Panc1 (cell line): ENCODE measurements at regions of chr2 and their contacts with region 1.

Region 1: GRCh38 chr2:219245148-219245898 is at the starts of genes GLB1L and STK16:
- DNase-seq: peak; percentile 62
- ATAC-seq: peak; percentile 95
- H3K4me3 ChIP-seq: peak within 1 kb of the TSS; percentile 84 to 94
- H3K27ac ChIP-seq: peak within 1 kb of the TSS; percentile 81
- H3K4me1 ChIP-seq: peaks cover 39% of the 10 kb centered on the region
- H3K27me3 ChIP-seq: no peaks in the 10 kb centered on the region
- CTCF ChIP-seq: no peak
- total RNA-seq, gene GLB1L: 8.1 TPM
- total RNA-seq, gene STK16: 29.9 TPM

Region 2: GRCh38 chr2:219229305-219230058 is 15.8 kb before region 1 on chr2 and contains the starts of genes ANKZF1 and ATG9A:
- CTCF ChIA-PET with region 1: no interaction called
- POLR2A ChIA-PET with region 1: interaction called, 11 read pairs
- in situ Hi-C with region 1: no loop called
- intact Hi-C with region 1: no loop called
- DNase-seq: peak; percentile 90
- ATAC-seq: peak; percentile 99
- H3K4me3 ChIP-seq: peak within 1 kb of the TSS; percentile 98 to 99
- H3K27ac ChIP-seq: peak within 1 kb of the TSS; percentile 91
- H3K4me1 ChIP-seq: peaks cover 8% of the 10 kb centered on the region
- H3K27me3 ChIP-seq: no peaks in the 10 kb centered on the region
- CTCF ChIP-seq: no peak
- total RNA-seq, gene ANKZF1: 36.2 TPM
- total RNA-seq, gene ATG9A: 75.1 TPM

Region 3: DNA sequence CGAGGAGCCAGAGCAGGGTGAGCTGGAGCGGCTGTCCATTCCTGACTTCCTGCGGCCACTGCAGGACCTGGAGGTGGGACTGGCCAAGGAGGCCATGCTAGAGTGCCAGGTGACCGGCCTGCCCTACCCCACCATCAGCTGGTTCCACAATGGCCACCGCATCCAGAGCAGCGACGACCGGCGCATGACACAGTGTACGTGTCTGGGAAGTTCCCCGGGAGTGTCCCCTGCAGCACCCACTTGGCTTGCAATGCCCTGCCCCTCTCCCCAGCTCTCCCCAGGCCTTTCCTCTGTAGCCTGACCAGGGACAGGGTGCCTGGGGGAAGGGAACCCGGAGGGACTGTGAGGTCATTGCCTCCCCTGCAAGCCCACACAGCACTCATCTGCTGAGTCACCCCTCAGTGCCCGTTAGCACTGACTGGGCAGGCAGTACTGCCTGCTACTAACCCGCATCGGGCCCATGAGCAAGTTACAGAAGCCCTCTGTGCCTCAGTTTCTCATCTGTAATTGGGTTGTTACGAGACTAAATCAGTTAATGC is 223.9 kb after region 1 on chr2:
- CTCF ChIA-PET with region 1: no interaction called
- POLR2A ChIA-PET with region 1: no interaction called
- in situ Hi-C with region 1: no loop called
- intact Hi-C with region 1: no loop called
- DNase-seq: no peak
- ATAC-seq: peak; percentile 43; the same call in 1 of the 2 replicates
- H3K4me3 ChIP-seq: no peak overlapping the region
- H3K27ac ChIP-seq: no peak overlapping the region
- H3K4me1 ChIP-seq: peaks cover 4% of the 10 kb centered on the region; the same call in 1 of the 2 replicates
- H3K27me3 ChIP-seq: no peaks in the 10 kb centered on the region
- CTCF ChIP-seq: no peak

Region 4: DNA sequence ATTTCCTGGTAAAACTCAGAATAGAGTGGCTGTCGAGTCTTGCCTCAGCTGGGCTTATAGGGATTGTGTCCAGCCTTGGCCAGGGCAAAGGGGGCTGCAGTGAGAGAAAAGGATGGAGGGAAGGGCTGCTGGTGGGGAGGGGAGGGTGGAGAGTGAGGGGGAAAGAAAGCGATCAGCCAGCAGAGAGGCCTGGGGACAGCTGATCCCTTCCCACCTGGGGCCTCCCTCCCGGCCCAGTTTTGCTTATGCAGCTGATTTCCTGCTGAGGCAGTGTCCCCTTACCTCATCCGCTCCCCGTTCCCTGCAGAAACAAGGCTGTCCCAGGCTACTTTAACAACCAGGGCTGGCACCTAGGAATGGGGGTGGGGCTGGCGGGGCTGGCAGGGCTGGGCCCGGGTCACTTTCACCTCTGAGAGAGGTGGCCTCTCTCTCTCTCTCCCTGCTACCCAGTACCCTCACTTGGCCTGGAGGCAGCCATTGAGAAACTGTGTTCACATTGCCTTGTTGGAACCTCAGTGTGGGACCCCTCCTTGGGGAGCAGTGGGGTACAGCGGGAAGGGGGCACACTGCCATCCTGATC is 241.1 kb after region 1 on chr2:
- CTCF ChIA-PET with region 1: no interaction called
- POLR2A ChIA-PET with region 1: interaction called, 13 read pairs
- in situ Hi-C with region 1: no loop called
- intact Hi-C with region 1: no loop called
- DNase-seq: no peak
- ATAC-seq: no peak
- H3K4me3 ChIP-seq: no peak overlapping the region
- H3K27ac ChIP-seq: no peak overlapping the region
- H3K4me1 ChIP-seq: no peaks in the 10 kb centered on the region
- H3K27me3 ChIP-seq: no peaks in the 10 kb centered on the region
- CTCF ChIP-seq: no peak